Activated T-helper 1 cell treated with anti-CD3 and anti-CD28 coated beads, Interleukin-12 subunit alpha, Interleukin-12 subunit beta, Interleukin-2, Interleukin-4 antibody, amounts not matched to agents 30 ng/mL and 10 ng/mL and 1 ng/mL, durations not matched to agents 14 hours and 24 hours and 36 hours (primary cell): ENCODE measurements at regions of chr16 and their contacts with region 1.

Region 1: DNA sequence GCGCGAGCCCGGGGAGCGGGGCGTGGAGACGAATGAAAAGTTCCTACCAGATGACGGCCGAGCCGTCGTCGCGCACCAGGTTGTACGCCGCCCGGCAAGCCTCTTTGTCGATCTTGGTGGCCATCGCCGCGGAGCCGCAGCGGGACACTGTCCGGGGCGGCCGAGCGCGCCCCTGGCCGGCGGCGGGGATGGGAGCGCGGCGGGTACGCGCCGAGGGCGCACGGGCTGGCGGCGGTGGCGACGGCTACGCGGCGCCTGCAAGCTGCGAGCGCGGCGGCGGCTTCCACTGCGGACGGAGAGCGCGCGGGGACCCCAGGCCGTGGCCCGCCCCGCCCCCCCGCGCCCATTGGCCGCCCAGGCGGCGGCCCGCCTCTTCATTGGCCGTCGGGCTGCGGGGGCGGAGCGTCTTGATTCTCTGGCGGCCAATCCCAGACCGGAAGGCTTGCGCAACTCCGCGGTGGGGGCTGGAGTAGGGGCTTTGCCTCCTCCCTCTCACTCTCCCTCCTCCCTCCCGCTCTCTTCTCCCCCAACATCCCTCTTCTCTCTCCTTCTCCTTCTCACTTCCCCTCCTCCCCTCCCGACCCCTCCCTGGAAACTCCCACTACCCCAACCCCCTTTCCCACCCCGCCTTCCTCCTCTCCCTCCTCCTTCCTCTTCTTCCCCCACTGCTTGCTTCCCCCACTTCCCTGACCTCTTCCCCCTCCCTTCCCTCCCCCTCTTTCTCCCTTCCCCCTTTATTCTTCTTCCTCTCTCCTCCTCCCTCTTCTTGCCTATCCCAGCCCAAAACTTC is at the start of gene COTL1:
- DNase-seq: peak; percentile 92
- H3K4me3 Mint-ChIP-seq: peak within 1 kb of the TSS; percentile 96
- H3K27ac Mint-ChIP-seq: peak within 1 kb of the TSS; percentile 84
- H3K4me1 Mint-ChIP-seq: peaks cover 62% of the 10 kb centered on the region
- H3K27me3 Mint-ChIP-seq: peaks cover 2% of the 10 kb centered on the region
- total RNA-seq, gene COTL1: 531 and 535 TPM in 2 replicates

Region 2: DNA sequence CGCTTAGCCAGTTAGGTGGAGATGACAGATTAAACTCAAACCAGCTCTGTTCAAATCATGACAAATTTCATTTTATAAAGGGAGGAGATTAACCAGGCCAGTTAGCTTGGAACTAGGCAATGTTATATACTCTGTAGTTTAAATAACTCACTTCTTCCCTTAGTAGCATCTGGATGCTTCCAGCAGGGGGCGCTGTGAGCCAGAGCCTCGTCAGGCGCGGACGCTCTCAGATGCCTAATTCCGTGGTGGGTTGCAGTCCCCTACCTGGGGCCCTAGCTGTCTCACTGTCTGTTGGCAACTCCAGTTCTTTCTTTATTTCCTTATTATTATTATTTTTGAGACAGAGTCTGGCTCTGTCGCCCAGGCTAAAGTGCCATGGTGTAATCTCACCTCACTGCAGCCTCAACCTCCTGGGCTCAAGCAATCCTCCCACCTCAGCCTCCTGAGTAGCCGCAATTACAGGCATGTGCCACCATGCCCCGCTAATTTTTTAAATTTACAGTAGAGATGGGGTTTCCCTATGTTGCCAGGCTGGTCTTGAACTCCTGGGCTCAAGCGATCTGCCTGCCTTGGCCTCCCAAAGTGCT is 340.7 kb before region 1 on chr16:
- intact Hi-C with region 1: loop called (anchors 2 kb)
- DNase-seq: peak; percentile 53
- H3K4me3 Mint-ChIP-seq: no peak overlapping the region
- H3K27ac Mint-ChIP-seq: no peak overlapping the region
- H3K4me1 Mint-ChIP-seq: no peaks in the 10 kb centered on the region
- H3K27me3 Mint-ChIP-seq: no peaks in the 10 kb centered on the region

Region 3: DNA sequence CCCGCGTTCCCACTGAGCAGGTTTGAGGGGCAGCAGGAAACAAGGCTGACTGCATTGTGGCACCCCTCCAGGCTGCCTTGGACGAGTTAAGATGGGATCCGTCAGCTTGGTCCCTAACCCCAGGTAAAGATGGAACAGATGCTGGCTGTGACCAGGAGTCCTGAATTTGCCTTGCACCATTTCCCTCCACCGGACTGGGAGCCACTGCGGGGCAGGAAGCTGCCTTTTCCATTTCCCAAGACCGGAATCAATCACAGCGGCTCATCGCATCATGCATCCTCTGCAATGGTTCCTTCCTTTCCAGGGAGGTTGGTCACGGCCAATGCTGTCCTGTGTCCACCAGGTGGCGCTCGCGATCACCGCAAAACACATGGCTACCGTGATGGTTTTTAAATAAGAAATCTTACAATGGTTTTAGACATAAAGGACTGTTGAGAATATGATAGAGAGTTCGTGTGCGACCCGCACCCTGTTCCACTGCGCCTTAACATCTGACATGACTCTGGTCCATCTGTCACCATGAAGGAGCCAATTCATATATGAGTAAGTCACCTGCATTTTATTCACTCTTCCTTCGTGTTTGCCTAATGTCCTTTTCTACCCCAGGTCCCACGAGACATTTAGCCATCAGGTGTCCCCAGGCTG is 106.7 kb before region 1 on chr16:
- intact Hi-C with region 1: loop called (anchors 1 kb)
- DNase-seq: peak; percentile 73
- H3K4me3 Mint-ChIP-seq: peak overlapping the region; percentile 38
- H3K27ac Mint-ChIP-seq: peak overlapping the region; percentile 49
- H3K4me1 Mint-ChIP-seq: peaks cover 72% of the 10 kb centered on the region
- H3K27me3 Mint-ChIP-seq: no peaks in the 10 kb centered on the region

Region 4: GRCh38 chr16:84599521-84600202 is 18.3 kb before region 1 on chr16:
- intact Hi-C with region 1: loop called (anchors 1 kb)
- DNase-seq: peak; percentile 46
- H3K4me3 Mint-ChIP-seq: peak overlapping the region; percentile 80
- H3K27ac Mint-ChIP-seq: peak overlapping the region; percentile 97
- H3K4me1 Mint-ChIP-seq: peaks cover 84% of the 10 kb centered on the region
- H3K27me3 Mint-ChIP-seq: no peaks in the 10 kb centered on the region

Region 5: DNA sequence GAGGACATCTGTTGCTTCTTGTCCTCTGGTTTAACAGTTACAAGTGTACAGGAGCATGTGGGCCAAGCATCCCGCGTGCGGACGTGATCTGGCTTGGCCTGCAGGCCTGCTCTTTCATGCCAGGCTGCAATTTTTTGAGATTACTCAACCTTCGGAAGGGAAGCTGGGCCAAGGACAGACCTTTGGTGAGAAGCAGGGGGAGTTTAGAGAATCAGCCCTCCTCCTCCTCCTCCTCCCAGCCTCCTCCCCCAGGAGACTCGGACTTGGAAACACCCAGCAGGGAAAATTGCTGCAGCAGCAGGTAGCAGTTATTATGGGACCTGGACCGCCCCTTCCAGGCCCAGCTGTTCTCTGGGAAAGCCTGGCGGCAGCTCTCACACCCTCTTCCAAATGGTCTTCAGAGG is 25.2 kb after region 1 on chr16:
- intact Hi-C with region 1: no loop called
- DNase-seq: no peak
- H3K4me3 Mint-ChIP-seq: no peak overlapping the region
- H3K27ac Mint-ChIP-seq: no peak overlapping the region
- H3K4me1 Mint-ChIP-seq: peaks cover 44% of the 10 kb centered on the region
- H3K27me3 Mint-ChIP-seq: peaks cover 21% of the 10 kb centered on the region

Region 6: GRCh38 chr16:84672276-84673202 is 54.6 kb after region 1 on chr16:
- intact Hi-C with region 1: loop called (anchors 2 kb)
- DNase-seq: peak; percentile 66
- H3K4me3 Mint-ChIP-seq: no peak overlapping the region
- H3K27ac Mint-ChIP-seq: no peak overlapping the region
- H3K4me1 Mint-ChIP-seq: peaks cover 8% of the 10 kb centered on the region
- H3K27me3 Mint-ChIP-seq: peaks cover 14% of the 10 kb centered on the region

Region 7: GRCh38 chr16:84738255-84739038 is 120.5 kb after region 1 on chr16:
- intact Hi-C with region 1: loop called (anchors 1 kb)
- DNase-seq: peak; percentile 62
- H3K4me3 Mint-ChIP-seq: peak overlapping the region; percentile 25
- H3K27ac Mint-ChIP-seq: no peak overlapping the region
- H3K4me1 Mint-ChIP-seq: peaks cover 59% of the 10 kb centered on the region
- H3K27me3 Mint-ChIP-seq: no peaks in the 10 kb centered on the region

Region 8: DNA sequence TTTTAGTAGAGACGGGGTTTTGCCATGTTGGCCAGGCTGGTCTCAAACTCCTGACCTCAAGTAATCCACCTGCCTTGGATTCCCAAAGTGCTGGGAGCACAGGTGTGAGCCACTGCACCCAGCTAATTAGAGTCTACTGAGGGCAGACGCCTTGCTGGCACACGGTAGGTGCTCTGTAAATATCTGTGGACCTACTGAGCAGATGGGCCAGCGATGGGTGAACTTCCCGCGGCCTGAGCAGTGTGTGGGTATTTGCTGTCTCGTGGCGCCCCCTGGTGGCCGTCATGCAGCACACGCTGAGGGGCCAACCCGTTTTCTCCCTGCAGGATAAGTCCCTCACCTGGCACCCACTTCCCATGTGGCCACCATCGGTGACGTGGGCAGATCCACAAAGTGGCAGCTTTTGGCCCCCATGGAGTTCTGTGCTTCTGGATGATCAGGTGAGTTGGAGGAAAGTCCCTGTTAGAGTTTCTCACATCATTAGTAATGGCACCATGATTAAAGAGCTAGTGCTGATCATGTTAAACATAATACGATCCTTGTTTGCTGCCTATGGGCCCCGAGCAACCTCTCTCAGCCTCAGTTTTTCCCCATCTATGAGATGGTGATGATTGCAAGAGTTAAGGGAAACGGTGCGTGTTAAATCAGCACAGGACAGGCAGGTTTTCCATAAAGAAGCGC is 352.6 kb after region 1 on chr16:
- intact Hi-C with region 1: loop called (anchors 5 kb)
- DNase-seq: peak; percentile 62
- H3K4me3 Mint-ChIP-seq: no peak overlapping the region
- H3K27ac Mint-ChIP-seq: no peak overlapping the region
- H3K4me1 Mint-ChIP-seq: peaks cover 6% of the 10 kb centered on the region
- H3K27me3 Mint-ChIP-seq: peaks cover 2% of the 10 kb centered on the region